ENCODE measurements at regions of chr19 and their contacts with region 1.

Region 1: GRCh38 chr19:18919086-18919899 is at the starts of genes COPE and DDX49:
- DNase-seq: peak; percentile 98
- ATAC-seq: peak; percentile 98
- H3K4me3 Mint-ChIP-seq: peak within 1 kb of the TSS; percentile 99
- H3K27ac Mint-ChIP-seq: peak within 1 kb of the TSS; percentile 96
- H3K4me1 Mint-ChIP-seq: peaks cover 41% of the 10 kb centered on the region
- H3K27me3 Mint-ChIP-seq: no peaks in the 10 kb centered on the region
- total RNA-seq, gene COPE: 158 to 182 TPM
- total RNA-seq, gene DDX49: 51.4 to 53.4 TPM

Region 2: DNA sequence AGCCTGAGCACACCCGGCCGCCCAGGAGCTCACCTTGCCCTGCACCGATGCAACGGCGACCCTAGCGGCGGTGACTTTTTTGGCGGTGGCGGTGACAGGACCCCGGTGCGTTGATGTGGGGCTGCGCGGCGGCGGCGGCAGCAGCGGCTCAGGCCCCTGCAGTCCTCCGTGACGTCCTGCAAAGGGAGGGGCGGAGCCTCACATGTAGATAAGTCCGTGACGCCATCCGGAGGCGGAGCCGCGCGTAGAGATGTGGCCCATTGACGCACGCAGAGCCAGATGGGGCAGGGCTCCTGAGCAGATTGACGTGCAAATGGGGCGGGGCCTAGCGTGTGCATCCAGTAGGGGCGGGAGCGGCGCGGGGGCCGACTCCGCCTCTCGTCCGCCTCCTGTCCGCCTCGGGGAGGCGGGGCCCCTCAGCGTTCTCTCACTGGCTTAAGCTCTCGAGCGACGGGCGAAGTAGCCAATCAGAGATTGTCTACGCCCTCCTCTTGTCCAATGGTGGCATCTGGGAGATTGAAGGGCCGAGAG is 715.4 kb before region 1 on chr19 and contains the start of gene RAB3A:
- CTCF ChIA-PET with region 1: no interaction called
- POLR2A ChIA-PET with region 1: no interaction called
- intact Hi-C with region 1: loop called in 1 of 2 experiments (anchors 1 kb)
- DNase-seq: peak; percentile 100
- ATAC-seq: peak; percentile 94
- H3K4me3 Mint-ChIP-seq: peak within 1 kb of the TSS; percentile 96
- H3K27ac Mint-ChIP-seq: peak within 1 kb of the TSS; percentile 90
- H3K4me1 Mint-ChIP-seq: peaks cover 18% of the 10 kb centered on the region
- H3K27me3 Mint-ChIP-seq: no peaks in the 10 kb centered on the region
- total RNA-seq, gene RAB3A: 5.6 to 8.9 TPM

Region 3: GRCh38 chr19:18571564-18572300 is 347.6 kb before region 1 on chr19 and contains the start of gene UBA52:
- CTCF ChIA-PET with region 1: no interaction called
- POLR2A ChIA-PET with region 1: no interaction called
- intact Hi-C with region 1: loop called (anchors 1 kb)
- DNase-seq: peak; percentile 100
- ATAC-seq: peak; percentile 94
- H3K4me3 Mint-ChIP-seq: peak within 1 kb of the TSS; percentile 89
- H3K27ac Mint-ChIP-seq: peak within 1 kb of the TSS; percentile 95
- H3K4me1 Mint-ChIP-seq: peaks cover 27% of the 10 kb centered on the region
- H3K27me3 Mint-ChIP-seq: no peaks in the 10 kb centered on the region
- total RNA-seq, gene UBA52: 1,703 to 2,296 TPM

Region 4: DNA sequence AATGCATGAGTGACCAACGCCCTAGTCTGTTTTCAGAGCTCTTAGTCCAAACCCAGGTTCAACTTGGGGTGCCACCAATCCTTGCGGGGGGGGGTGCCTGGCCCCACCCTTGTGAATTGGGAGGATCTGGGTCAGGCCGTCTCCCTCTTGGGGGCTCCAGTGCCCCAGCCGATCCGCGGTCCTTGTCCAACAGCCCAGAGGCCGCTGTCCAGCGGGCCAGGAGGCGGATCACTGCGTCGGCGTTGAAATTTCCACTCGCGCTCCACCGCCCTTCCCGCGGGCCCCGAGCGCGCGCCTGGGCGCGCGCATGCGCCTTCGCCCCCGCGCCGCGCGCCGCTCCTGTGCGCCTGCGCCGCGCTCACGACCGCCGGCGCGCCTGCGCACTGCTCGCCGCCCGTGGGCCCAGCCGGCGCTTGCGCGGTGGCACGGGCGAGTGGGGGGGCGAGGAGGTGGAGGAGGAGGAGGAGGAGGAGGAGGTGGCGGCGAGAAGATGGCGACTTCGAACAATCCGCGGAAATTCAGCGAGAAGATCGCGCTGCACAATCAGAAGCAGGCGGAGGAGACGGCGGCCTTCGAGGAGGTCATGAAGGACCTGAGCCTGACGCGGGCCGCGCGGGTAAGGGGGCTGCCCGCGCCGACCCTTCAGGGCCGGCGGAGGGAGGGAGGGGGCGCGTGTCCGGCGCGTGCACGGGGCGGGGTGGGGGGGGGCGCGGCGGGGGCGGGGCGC is 235.9 kb before region 1 on chr19 and contains the start of gene CRTC1:
- CTCF ChIA-PET with region 1: no interaction called
- POLR2A ChIA-PET with region 1: interaction called, 3 read pairs
- intact Hi-C with region 1: loop called in 1 of 2 experiments (anchors 1 kb)
- DNase-seq: peak; percentile 95
- ATAC-seq: peak; percentile 91
- H3K4me3 Mint-ChIP-seq: peak within 1 kb of the TSS; percentile 83
- H3K27ac Mint-ChIP-seq: peak within 1 kb of the TSS; percentile 89
- H3K4me1 Mint-ChIP-seq: peaks cover 16% of the 10 kb centered on the region
- H3K27me3 Mint-ChIP-seq: no peaks in the 10 kb centered on the region
- total RNA-seq, gene CRTC1: 5.3 to 9.7 TPM

Region 5: DNA sequence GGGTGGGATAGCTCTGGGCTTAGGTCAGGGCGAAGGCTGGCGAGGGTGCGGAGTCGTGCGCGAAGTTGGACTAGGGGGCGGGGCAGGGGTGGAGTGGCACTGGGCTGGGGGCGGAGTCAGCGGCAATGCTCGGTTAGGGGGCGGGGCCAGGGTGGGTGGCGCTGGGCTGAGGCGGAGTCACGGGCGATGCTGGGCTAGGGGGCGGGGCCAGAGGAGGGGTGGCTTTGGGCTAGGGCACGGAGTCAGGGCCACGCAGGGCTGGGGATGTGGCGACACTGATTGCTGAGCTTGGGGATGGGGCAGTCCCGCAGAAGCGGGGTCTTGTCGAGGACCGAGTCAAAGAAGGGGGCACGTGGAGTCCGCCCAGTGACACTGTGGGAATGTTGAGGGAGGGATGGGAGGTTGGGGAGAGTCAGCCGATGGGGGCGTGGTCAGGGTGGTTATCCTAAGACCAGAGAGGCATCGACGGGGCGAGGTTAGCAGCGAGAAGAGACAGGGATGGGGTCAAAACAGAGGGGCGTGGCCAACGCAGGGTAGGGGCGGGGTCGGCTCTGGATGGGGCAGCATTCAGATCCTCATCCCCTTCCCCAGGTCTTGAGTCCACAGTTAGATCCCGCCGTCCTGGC is 13.0 kb after region 1 on chr19:
- CTCF ChIA-PET with region 1: interaction called, 11 read pairs
- POLR2A ChIA-PET with region 1: interaction called, 14 read pairs
- intact Hi-C with region 1: loop called (anchors 1 kb)
- DNase-seq: peak; percentile 95
- ATAC-seq: peak; percentile 98
- H3K4me3 Mint-ChIP-seq: peak overlapping the region; percentile 53
- H3K27ac Mint-ChIP-seq: no peak overlapping the region
- H3K4me1 Mint-ChIP-seq: peaks cover 6% of the 10 kb centered on the region
- H3K27me3 Mint-ChIP-seq: peaks cover 1% of the 10 kb centered on the region

Region 6: GRCh38 chr19:19063183-19064097 is 144.1 kb after region 1 on chr19 and contains the start of gene SLC25A42:
- CTCF ChIA-PET with region 1: no interaction called
- POLR2A ChIA-PET with region 1: no interaction called
- intact Hi-C with region 1: loop called in 1 of 2 experiments (anchors 1 kb)
- DNase-seq: peak; percentile 99
- ATAC-seq: peak; percentile 96
- H3K4me3 Mint-ChIP-seq: peak within 1 kb of the TSS; percentile 75
- H3K27ac Mint-ChIP-seq: peak within 1 kb of the TSS; percentile 85
- H3K4me1 Mint-ChIP-seq: peaks cover 34% of the 10 kb centered on the region
- H3K27me3 Mint-ChIP-seq: no peaks in the 10 kb centered on the region
- total RNA-seq, gene SLC25A42: 10.4 to 10.6 TPM

Measured in activated CD4-positive, alpha-beta T cell treated with anti-CD3 and anti-CD28 coated beads for 36 hours (primary cell).